ENCODE measurements at regions of chr1 and their contacts with region 1.

Region 1: DNA sequence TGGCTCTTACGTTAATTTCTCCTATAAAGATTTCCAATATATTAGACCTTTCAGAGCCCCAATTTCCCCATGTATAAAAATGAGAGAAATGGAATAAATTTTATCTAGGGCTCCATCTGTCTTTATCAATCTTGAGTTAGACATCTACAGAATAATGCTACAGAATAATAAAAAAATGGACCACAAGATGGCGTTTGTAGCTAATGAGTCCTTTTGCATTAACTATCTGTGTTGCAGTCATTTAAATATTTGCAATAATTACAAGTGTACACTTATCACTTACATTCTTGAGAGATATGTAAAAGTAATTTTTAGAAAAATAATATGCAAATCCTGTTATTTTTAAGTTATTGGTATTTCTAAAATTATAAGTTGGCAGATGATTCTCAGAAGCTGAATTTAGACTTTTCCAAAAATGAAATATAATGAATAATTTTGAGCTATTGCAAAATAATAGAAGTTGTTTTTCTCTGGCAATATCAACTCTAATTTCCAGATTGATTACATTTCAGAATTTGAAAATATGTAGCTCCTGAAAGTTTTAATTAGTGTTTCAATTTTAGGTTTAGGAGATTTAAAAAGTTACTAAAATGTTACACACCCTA is 87.7 kb downstream of the SNX7 start:
- DNase-seq: peak in 1 of 35 experiments; percentile 40
- ATAC-seq: no peak
- H3K4me3 ChIP-seq: no peak overlapping the region
- H3K4me3 Mint-ChIP-seq: no peak overlapping the region
- H3K27ac ChIP-seq: no peak overlapping the region
- H3K27ac Mint-ChIP-seq: no peak overlapping the region
- H3K4me1 ChIP-seq: no peaks in the 10 kb centered on the region
- H3K4me1 Mint-ChIP-seq: no peaks in the 10 kb centered on the region
- H3K27me3 ChIP-seq: no peaks in the 10 kb centered on the region
- H3K27me3 Mint-ChIP-seq: peaks cover 0 to 7% of the 10 kb centered on the region in 2 donors

Region 2: DNA sequence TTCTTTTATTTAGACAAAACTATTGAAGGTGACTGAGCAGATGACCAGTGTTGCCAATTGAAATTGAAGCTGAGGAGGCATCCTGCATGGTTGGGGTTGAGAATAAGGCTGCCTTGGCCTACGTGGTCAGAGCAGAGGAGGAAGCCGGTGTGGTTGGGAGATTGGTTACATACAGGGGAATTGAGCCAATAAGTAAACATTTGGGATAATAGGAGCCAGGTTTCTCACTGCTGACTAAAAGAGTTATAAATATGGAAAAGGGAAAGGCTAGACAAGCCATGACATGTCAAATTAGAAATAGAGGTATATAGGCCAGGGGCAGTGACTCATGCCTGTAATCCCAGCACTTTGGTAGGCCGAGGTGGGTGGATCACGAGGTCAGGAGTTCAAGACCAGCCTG is 72.0 kb before region 1 on chr1:
- CTCF ChIA-PET with region 1: no interaction called
- POLR2A ChIA-PET with region 1: no interaction called
- DNase-seq: no peak
- ATAC-seq: no peak
- H3K4me3 ChIP-seq: no peak overlapping the region
- H3K4me3 Mint-ChIP-seq: no peak overlapping the region
- H3K27ac ChIP-seq: no peak overlapping the region
- H3K27ac Mint-ChIP-seq: no peak overlapping the region
- H3K4me1 ChIP-seq: no peaks in the 10 kb centered on the region
- H3K4me1 Mint-ChIP-seq: no peaks in the 10 kb centered on the region
- H3K27me3 ChIP-seq: no peaks in the 10 kb centered on the region
- H3K27me3 Mint-ChIP-seq: peaks cover under 1 to 5% of the 10 kb centered on the region in 2 donors

Region 3: GRCh38 chr1:99481391-99481996 is 732.2 kb after region 1 on chr1:
- CTCF ChIA-PET with region 1: interaction called, 7 to 21 read pairs
- POLR2A ChIA-PET with region 1: interaction called in 1 of 2 experiments, 3 read pairs
- DNase-seq: peak in 25 of 35 experiments; percentile 1 to 63 (median 15)
- ATAC-seq: peak in 1 of 4 experiments; percentile 53
- H3K4me3 ChIP-seq: no peak overlapping the region
- H3K4me3 Mint-ChIP-seq: no peak overlapping the region
- H3K27ac ChIP-seq: no peak overlapping the region
- H3K27ac Mint-ChIP-seq: no peak overlapping the region
- H3K4me1 ChIP-seq: no peaks in the 10 kb centered on the region
- H3K4me1 Mint-ChIP-seq: no peaks in the 10 kb centered on the region
- H3K27me3 ChIP-seq: no peaks in the 10 kb centered on the region
- H3K27me3 Mint-ChIP-seq: peaks cover 7 to 27% of the 10 kb centered on the region in 2 donors

Measured in T-cell (primary cell).